Left cardiac atrium (tissue), 4 donors: ENCODE measurements at regions of chr9 and their contacts with region 1.

Region 1: DNA sequence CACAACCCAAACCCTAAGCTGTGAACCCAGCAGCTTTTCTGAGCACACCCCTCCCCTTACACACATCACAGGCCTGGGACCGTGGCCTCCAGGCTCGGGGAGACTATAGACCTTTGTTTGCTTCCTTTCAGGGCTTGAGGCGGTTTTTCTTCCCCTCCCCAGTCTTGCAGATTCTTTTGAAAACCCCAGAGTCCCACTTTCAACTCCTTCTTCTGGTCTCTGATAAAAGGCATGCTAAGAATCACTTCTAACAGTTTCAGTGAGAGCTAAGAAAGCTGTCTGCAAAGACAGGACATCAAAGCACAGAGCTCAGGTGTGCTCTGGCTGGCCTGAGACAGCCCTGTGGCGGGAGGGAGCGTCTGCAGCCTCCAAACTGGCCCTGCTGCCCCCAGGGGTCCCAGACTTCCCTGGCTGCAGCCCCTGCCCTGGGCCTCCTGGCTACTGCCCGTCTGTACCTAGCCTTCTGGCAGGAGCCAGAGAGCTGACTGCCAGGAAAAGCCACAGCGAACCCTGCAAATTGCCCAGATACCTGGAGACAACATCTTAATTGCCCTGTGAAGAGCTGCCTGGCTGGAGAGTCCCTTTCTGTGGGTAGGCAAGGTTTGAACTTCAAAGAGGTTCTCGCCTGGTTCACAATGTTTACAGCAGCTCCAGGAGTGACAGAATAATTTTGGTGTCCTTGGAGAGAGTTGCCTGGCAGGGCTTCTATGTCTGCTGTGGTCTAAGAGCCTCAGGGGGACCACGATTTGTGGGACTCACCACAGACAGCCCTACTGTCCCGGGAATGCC is 139.0 kb downstream of the GADD45G start:
- DNase-seq: no peak
- ATAC-seq: no peak

Region 2: GRCh38 chr9:89821104-89821480 is 77.3 kb after region 1 on chr9:
- intact Hi-C with region 1: loop called in 1 of 2 experiments (anchors 10 kb)
- DNase-seq: no peak
- ATAC-seq: no peak

Region 3: DNA sequence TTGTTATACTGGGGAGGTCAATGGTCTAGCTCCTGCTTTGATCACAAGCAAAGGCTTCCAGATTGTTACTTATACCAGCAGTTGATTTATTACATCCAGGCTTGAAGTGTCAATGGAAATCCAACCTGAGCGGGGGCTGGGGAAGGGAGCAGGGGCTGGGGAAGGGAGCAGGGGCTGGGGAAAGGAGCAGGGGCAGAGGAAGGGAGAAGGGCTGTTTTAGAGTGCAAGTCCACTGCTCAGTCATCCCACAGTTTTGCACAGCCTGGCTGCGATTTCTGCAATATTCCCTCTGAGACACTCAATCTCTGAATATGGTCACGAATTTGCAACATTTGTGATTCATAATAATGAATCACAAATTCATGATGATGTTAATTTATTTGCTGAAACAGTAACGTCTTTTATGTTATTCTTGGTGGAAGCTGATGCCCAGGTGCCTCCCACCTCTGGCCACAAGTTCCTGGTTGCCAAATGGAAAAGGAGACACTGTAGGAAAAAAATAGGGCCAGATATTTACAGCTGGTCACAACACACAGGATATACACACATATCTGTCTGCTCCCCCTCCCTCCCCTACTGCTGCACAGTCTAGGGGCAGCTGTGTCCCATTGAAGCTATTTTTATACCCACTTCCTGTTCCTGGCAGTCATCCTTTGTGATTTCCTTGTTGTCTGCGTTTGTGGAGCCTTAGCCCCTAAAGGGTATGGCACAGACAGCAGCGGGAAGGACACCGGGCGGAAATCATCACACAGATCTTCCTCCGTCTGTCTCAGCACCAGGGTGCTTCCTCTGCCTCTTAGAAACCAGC is 186.1 kb after region 1 on chr9:
- intact Hi-C with region 1: loop called in 1 of 2 experiments (anchors 10 kb)
- DNase-seq: no peak
- ATAC-seq: peak; percentile 71 to 89